ENCODE measurements at regions of chr1 and their contacts with region 1.

Region 1: GRCh38 chr1:61453111-61453961 is 271.6 kb downstream of the TM2D1 start:
- DNase-seq: peak; percentile 79 to 91
- ATAC-seq: peak; percentile 66 to 88 (median 78)
- H3K4me3 ChIP-seq: peak overlapping the region in 2 of 10 donors; percentile 1 to 9
- H3K27ac ChIP-seq: peak overlapping the region; percentile 51 to 91 (median 83)
- H3K4me1 ChIP-seq: peaks cover 33 to 68% (median 65%) of the 10 kb centered on the region in 9 donors
- H3K27me3 ChIP-seq: no peaks in the 10 kb centered on the region
- CTCF ChIP-seq: peak; percentile 49 to 88 (median 82)

Region 2: GRCh38 chr1:60989749-60990713 is 463.3 kb before region 1 on chr1:
- intact Hi-C with region 1: loop called in 1 of 10 experiments (anchors 10 kb)
- DNase-seq: peak; percentile 33 to 71
- ATAC-seq: peak; percentile 60 to 85 (median 80)
- H3K4me3 ChIP-seq: no peak overlapping the region
- H3K27ac ChIP-seq: peak overlapping the region; percentile 26 to 86 (median 70)
- H3K4me1 ChIP-seq: peaks cover 3 to 39% (median 22%) of the 10 kb centered on the region in 9 donors
- H3K27me3 ChIP-seq: no peaks in the 10 kb centered on the region
- CTCF ChIP-seq: no peak

Region 3: GRCh38 chr1:61184040-61184713 is 269.2 kb before region 1 on chr1:
- intact Hi-C with region 1: loop called in 6 of 10 experiments (anchors 5 to 10 kb)
- DNase-seq: peak; percentile 92 to 95
- ATAC-seq: peak; percentile 93 to 98 (median 94)
- H3K4me3 ChIP-seq: peak overlapping the region in 9 of 10 donors; percentile 18 to 57 (median 48)
- H3K27ac ChIP-seq: peak overlapping the region; percentile 72 to 96 (median 88)
- H3K4me1 ChIP-seq: peaks cover 12 to 83% (median 67%) of the 10 kb centered on the region in 9 donors
- H3K27me3 ChIP-seq: no peaks in the 10 kb centered on the region
- CTCF ChIP-seq: no peak

Region 4: GRCh38 chr1:61270761-61271411 is 182.4 kb before region 1 on chr1:
- intact Hi-C with region 1: loop called in 1 of 10 experiments (anchors 10 kb)
- DNase-seq: no peak
- ATAC-seq: no peak
- H3K4me3 ChIP-seq: no peak overlapping the region
- H3K27ac ChIP-seq: no peak overlapping the region
- H3K4me1 ChIP-seq: peaks cover 0 to 46% (median 21%) of the 10 kb centered on the region in 9 donors
- H3K27me3 ChIP-seq: no peaks in the 10 kb centered on the region
- CTCF ChIP-seq: no peak

Region 5: DNA sequence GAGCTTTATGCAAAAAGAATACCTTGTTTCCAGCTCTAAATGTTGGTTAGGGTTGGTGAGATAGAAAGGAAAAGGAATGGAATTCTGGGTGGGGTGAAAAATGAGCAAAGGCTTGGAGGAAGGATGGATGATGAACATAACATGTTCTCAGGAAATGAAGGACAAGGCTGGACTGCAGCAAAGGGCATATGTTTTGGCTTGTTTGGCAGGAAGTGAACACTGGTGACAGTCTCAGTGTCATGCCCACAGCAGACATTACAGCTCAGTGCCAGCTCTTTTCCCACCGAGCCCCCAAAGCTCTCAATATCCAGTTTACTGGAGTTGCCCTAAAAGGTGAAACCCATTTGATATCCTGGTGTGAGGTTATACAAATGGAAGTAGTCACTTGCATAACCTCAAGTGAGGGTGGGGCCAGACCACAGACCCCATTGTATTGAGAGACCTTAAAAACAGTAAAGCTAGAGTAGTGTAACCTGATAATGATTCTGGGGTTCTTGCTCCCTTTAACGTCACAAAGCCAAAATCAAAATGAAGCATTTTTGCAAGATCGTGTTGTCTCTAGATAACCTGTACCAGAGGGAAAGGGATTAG is 100.4 kb before region 1 on chr1:
- intact Hi-C with region 1: loop called in 2 of 10 experiments (anchors 5 to 10 kb)
- DNase-seq: no peak
- ATAC-seq: peak in 6 of 8 donors; percentile 41 to 66 (median 47)
- H3K4me3 ChIP-seq: no peak overlapping the region
- H3K27ac ChIP-seq: peak overlapping the region in 7 of 10 donors; percentile 22 to 67 (median 39)
- H3K4me1 ChIP-seq: peaks cover 0 to 44% (median 15%) of the 10 kb centered on the region in 9 donors
- H3K27me3 ChIP-seq: no peaks in the 10 kb centered on the region
- CTCF ChIP-seq: no peak

Region 6: GRCh38 chr1:61481313-61481712 is 28.0 kb after region 1 on chr1:
- intact Hi-C with region 1: no loop called
- DNase-seq: no peak
- ATAC-seq: no peak
- H3K4me3 ChIP-seq: no peak overlapping the region
- H3K27ac ChIP-seq: no peak overlapping the region
- H3K4me1 ChIP-seq: no peaks in the 10 kb centered on the region
- H3K27me3 ChIP-seq: peaks cover 0 to 3% (median 0%) of the 10 kb centered on the region in 7 donors
- CTCF ChIP-seq: no peak

Region 7: GRCh38 chr1:61491497-61491896 is 38.2 kb after region 1 on chr1:
- intact Hi-C with region 1: no loop called
- DNase-seq: no peak
- ATAC-seq: peak; percentile 72 to 91 (median 87)
- H3K4me3 ChIP-seq: no peak overlapping the region
- H3K27ac ChIP-seq: peak overlapping the region in 8 of 10 donors; percentile 34 to 63 (median 53)
- H3K4me1 ChIP-seq: peaks cover 0 to 26% (median 8%) of the 10 kb centered on the region in 9 donors
- H3K27me3 ChIP-seq: no peaks in the 10 kb centered on the region
- CTCF ChIP-seq: no peak

Measured in heart right ventricle (tissue), 16 donors.